ENCODE measurements at regions of chr2 and their contacts with region 1.

Region 1: DNA sequence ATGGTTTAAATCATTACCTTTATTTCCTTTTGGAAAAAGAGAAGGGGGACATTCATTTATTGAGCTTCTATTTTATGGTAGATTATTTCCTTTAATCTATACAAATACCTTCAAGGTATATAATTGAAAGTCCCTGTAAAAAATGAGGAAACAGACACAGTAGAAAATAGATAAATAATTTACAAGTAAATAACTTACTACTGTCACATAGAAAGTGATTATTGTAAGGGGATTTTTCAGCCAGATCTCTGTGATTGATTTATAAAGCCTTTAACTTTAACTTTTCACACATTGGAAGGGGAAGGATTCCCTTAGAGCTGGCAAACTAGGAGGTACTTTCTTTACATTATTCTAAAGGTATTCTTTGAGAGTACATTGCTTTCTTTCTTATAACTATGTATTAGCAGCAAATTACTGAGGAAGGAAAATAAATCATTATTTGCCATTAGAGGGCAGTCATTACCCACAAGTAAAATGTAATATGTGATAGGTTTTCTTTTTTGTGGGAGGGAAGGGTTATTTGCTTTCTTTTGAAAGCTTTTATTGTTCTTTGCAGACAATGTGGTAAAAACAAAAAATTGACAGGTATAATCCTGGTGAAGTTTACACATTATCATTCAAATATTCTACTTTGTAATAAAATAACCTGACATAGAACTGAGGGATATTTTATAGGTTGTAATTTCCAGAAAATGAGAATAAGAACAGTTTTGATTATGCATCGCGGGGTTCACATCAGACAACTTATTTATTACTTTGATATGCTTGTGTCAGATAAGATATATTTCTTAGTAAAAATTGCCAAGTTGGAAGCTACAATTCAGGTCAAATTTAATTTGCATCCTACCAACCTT is 24.8 kb upstream of the RPE start:
- DNase-seq: no peak
- H3K4me3 ChIP-seq: no peak overlapping the region
- H3K27me3 ChIP-seq: peaks cover 2% of the 10 kb centered on the region; the same call in 1 of the 2 replicates
- CTCF ChIP-seq: peak; percentile 45

Region 2: DNA sequence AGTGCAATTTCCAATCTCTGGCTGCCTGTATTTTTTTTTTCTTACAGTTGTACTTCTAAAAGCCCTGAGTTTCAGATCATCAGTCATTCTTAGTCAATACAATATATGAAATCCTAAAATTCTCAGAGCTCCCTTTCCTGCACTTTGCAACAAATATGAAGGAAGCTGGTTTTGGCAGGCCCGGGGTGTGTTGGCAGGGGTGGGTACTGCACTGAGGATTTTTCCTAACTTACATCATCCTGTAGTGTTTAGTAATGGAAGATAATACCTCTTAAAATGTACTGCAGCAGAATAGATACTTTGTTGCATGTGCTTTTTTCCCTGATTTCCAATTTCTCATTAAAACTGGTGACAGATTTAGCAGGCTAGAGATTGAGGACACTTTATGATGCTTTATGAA is 1196.4 kb before region 1 on chr2:
- CTCF ChIA-PET with region 1: no interaction called
- POLR2A ChIA-PET with region 1: no interaction called
- DNase-seq: no peak
- H3K4me3 ChIP-seq: no peak overlapping the region
- H3K27me3 ChIP-seq: no peaks in the 10 kb centered on the region
- CTCF ChIP-seq: no peak

Region 3: DNA sequence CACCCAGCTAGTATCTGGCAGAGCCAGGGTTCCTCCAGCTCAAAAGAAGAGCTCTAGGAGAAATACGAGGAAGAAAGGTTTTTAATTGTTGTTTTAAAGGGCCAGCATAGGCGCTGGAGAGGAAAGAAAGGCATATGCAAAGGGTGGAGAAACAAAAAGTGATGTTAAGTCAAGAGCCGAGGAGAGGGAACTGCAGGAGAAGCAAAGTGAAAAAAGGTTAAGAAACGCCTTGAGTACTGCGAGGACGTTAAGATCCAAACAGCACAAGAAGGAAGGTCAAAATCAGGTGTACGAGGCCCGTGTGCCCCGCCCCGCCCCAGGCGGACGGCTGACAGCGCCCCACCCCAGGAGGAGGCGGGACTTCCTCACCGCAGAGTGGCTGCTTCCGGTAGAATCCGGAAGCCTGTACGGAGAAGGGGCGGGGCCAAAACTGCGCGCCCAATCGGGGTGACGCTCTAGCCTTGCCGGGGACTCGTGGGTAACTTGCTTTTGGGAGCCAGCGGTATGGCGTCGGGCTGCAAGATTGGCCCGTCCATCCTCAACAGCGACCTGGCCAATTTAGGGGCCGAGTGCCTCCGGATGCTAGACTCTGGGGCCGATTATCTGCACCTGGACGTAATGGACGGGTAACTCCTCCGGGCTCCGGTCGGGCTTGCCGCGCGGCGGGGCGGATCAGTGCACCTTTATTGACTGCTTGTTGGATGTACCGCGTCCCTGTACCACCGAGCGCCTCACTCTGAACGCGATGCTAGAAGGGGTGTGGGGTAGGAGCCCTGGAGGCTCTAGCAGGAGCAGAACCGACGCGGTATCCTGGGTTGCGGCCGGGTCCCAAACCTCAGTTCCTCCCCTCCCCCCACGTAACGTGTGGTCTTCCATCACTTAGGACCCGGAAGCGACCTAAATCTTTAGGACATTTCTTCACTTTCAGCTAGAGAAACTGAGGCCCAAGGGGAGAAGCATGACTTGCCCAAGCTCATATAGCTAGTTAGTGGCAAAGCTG is 24.8 kb after region 1 on chr2 and contains the start of gene RPE:
- CTCF ChIA-PET with region 1: no interaction called
- POLR2A ChIA-PET with region 1: no interaction called
- DNase-seq: peak; percentile 66
- H3K4me3 ChIP-seq: peak within 1 kb of the TSS; percentile 55
- H3K27me3 ChIP-seq: no peaks in the 10 kb centered on the region
- CTCF ChIP-seq: no peak
- polyA plus RNA-seq, gene RPE: 71.0 and 78.3 TPM in 2 replicates

Region 4: DNA sequence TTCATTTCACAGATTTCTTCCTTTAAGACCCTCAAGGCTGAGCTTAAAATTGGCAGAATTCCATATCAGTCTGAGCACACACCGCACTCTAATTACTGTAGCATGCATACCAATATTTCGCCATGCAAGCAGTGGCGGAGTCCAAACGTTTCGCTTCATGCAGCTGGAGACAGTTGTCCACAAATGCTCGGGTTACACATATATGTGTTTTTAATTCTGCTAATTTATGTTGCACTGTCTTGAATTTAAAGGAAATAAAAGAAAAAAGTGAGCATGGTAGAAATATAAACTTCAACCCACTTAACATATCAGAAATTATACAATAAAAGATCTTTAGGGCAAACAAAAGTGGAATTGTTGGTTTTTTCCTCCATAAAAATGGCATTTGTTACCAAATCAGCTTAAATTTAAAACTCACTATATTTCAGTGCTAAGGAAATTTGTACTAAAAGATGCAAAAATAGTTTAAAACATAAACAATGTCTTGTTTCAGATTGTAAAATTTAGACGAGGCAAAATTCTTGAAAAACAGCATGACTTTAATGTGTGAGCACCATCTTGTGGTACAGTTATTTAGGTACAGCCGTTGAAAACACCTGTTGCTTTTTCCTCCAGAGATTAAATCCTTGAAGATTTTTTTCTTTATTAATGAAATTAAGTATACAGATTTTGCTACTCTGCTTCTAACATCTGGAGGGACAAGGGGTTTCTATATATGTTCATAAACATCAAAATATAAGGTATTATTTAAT is 217.7 kb after region 1 on chr2:
- CTCF ChIA-PET with region 1: interaction called, 32 read pairs
- POLR2A ChIA-PET with region 1: no interaction called
- DNase-seq: no peak
- H3K4me3 ChIP-seq: 0 out of 2 replicates have a peak overlapping the region, but pooled peaks have one; percentile 2
- H3K27me3 ChIP-seq: no peaks in the 10 kb centered on the region
- CTCF ChIP-seq: peak; percentile 54

Region 5: DNA sequence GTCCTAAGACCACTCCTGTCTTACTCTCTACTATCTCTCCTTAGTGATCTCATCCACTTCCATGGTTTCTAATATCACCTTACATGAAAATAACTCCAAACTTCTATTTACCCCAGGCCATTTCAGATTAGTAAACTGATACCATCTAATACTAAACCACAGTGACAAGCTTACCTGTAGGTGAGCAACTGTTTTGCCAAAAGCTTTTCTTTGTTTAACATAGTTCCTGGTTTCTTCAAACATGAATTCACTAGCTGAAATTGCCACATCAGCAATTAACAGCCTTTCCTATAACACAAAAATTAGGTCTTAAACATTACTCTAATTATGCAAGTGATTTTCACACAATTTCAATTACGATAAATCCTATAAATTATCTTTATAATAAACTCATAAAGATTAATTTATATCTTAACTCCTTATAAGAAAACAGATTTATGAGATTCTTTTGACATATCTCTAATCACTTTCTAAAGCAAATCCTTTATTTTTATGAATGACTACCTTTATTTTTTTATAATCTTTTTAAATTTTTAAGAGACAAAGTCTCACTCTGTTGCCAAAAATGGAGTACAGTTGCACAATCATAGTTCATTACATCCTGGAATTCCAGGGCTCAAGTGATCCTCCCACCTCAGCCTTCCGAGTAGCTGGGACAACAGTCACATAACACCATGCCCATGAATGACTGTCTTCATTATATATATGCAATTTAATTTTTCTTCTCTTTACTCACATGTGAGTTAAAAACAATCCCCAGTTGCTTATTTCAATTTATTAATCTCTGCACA is 225.7 kb after region 1 on chr2:
- CTCF ChIA-PET with region 1: interaction called, 29 read pairs
- POLR2A ChIA-PET with region 1: no interaction called
- DNase-seq: no peak
- H3K4me3 ChIP-seq: no peak overlapping the region
- H3K27me3 ChIP-seq: peaks cover 3% of the 10 kb centered on the region
- CTCF ChIP-seq: no peak

Measured in BJ (cell line).